Activated B cell treated with CpG ODN at 0.5 μM for 24 hours (primary cell): ENCODE measurements at regions of chr7 and their contacts with region 1.

Region 1: DNA sequence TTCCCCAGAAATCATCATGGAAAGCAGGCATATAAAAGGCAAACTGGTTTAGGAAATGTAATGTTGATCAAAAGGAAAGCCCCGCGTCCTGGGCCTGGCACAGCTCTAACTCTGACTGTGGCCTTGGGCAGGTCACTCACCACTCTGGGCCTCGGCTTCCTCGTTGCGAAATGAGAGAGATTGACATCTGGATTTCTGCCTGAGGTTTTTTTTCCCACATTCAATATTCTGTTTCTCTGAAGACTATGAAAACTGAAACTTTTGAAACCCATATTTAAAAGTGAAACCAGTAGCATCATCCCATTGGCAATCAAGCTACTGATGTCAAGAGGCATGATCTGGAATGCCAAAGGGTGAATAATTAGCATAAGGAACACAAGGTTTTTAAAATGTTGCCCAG is 369.7 kb upstream of the NPVF start:
- DNase-seq: no peak
- ATAC-seq: no peak
- H3K4me3 Mint-ChIP-seq: no peak overlapping the region
- H3K27ac Mint-ChIP-seq: no peak overlapping the region
- H3K4me1 Mint-ChIP-seq: peaks cover 1% of the 10 kb centered on the region
- H3K27me3 Mint-ChIP-seq: peaks cover 2% of the 10 kb centered on the region
- CTCF ChIP-seq: no peak

Region 2: DNA sequence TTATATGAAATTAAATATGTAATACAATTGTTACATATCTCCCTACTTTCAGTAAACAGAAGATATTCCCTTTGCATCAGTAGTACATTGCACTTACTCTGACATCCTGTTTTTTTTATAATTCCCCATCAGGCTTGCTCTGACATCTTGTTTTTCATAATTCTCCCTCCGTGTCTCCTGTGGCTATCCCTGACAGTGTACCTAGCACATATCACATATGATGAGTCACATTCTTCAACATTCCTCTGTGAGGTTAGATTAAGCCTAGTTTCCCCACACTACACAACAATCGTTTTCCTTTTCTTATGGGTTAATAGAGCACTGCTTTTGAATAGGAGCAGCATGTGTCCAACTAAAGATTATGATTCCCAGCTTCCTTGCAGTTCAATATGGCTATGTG is 119.0 kb before region 1 on chr7:
- CTCF ChIA-PET with region 1: no interaction called
- POLR2A ChIA-PET with region 1: interaction called, 10 read pairs
- intact Hi-C with region 1: no loop called
- DNase-seq: no peak
- ATAC-seq: no peak
- H3K4me3 Mint-ChIP-seq: no peak overlapping the region
- H3K27ac Mint-ChIP-seq: no peak overlapping the region
- H3K4me1 Mint-ChIP-seq: no peaks in the 10 kb centered on the region
- H3K27me3 Mint-ChIP-seq: peaks cover 12% of the 10 kb centered on the region
- CTCF ChIP-seq: no peak

Region 3: GRCh38 chr7:26052721-26053120 is 454.8 kb after region 1 on chr7:
- CTCF ChIA-PET with region 1: no interaction called
- POLR2A ChIA-PET with region 1: no interaction called
- intact Hi-C with region 1: no loop called
- DNase-seq: no peak
- ATAC-seq: no peak
- H3K4me3 Mint-ChIP-seq: no peak overlapping the region
- H3K27ac Mint-ChIP-seq: no peak overlapping the region
- H3K4me1 Mint-ChIP-seq: no peaks in the 10 kb centered on the region
- H3K27me3 Mint-ChIP-seq: peaks cover 40% of the 10 kb centered on the region
- CTCF ChIP-seq: no peak